ENCODE measurements at regions of chr6 and their contacts with region 1.

Region 1: DNA sequence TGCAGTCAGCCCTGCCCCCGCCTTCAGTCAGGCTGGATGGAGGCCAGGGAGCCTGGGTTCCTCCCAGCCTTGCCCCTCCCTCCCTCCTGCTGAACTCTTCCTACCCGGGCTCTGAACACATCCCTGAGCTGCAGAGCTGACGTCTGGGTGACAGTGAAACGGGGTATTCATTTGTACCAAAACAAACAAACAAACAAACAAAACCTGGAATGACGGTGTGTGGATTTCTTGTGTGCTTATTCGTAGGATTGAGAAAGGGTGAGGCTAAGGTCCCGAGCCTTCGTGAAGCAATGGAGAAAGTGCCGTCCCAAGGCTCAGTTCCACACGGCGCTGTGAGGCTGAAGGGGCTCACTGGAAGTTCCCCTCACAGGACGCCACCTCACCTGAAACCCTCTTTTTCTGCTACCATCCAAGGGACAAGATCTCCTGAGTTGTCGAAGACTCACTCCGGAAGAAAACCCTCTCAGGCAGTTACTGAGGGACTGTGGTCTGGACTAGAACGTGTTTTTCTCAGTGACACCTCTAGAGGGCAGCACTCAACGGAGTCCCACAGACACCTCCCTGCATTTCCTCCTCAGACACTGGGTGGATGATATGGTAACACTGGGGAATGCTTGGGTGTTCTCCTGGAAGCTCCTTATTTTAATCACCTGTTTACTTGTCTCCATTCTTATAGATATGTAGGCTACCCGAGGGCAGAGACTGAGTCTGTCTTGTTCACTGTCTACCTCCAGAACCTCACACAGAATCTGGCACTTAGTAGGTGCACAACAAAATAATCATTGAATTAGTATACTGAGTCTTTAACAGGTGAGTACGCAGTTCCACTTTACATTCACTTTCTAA is 27.3 kb downstream of the GSTA3 start:
- DNase-seq: peak; percentile 63 to 67
- H3K4me3 ChIP-seq: peak overlapping the region; percentile 55; the same call in 1 of the 2 replicates
- H3K27ac ChIP-seq: no peak overlapping the region
- H3K4me1 ChIP-seq: peaks cover 6% of the 10 kb centered on the region
- H3K27me3 ChIP-seq: no peaks in the 10 kb centered on the region
- CTCF ChIP-seq: peak; percentile 86

Region 2: DNA sequence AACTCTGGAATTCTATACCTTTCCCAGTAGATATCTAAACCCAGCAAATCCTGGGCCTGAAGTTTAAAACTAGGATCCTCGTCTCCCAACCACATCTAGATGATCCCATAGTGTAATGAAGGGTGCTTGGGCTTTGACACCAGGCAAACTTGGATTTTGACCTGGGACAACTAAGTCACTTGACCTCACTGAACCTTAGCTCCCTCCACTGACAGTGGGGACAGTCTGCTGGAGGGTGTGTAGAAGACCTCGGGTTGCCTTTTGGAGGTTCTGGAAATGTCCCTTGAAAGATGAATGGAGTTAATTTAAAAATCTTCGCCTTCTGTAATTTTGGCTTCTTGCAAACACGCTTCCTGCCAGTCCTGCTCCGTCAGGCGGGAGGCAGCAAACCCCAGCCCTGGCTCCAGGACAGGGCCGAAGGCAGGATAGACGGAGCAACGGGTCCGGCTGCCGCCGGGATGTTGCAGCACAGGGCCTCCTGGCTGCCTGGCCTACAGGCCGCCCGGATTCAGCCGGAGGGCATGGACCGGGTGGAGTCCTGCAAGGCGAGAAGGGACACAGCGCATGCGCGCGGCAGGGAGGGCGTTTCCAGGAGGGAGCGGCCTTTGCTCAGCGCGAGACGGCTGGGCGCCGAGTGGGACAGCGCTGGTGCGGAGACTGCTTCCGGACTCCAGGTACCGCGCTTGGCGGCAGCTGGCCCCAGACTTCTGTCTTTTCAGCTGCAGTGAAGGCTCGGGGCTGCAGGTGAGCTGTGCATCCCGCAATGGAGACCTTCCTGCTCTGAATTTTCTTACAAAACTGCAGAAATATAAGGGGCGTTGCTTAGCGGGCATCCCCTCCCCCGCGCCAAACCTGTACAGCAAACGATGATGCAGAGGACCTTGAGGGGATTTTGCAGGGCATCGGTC is 211.5 kb before region 1 on chr6 and contains the start of gene TMEM14A:
- CTCF ChIA-PET with region 1: interaction called, 10 read pairs
- POLR2A ChIA-PET with region 1: no interaction called
- intact Hi-C with region 1: no loop called
- DNase-seq: peak; percentile 85 to 96
- H3K4me3 ChIP-seq: peak within 1 kb of the TSS; percentile 69
- H3K27ac ChIP-seq: no peak within 1 kb of the TSS
- H3K4me1 ChIP-seq: peaks cover 22% of the 10 kb centered on the region
- H3K27me3 ChIP-seq: no peaks in the 10 kb centered on the region
- CTCF ChIP-seq: no peak
- total RNA-seq, gene TMEM14A: 48.9 and 75.2 TPM in 2 replicates

Region 3: GRCh38 chr6:52839119-52840055 is 42.8 kb before region 1 on chr6:
- CTCF ChIA-PET with region 1: no interaction called
- POLR2A ChIA-PET with region 1: no interaction called
- intact Hi-C with region 1: loop called (anchors 5 kb)
- DNase-seq: peak; percentile 50 to 63
- H3K4me3 ChIP-seq: peak overlapping the region; percentile 21; the same call in 1 of the 2 replicates
- H3K27ac ChIP-seq: no peak overlapping the region
- H3K4me1 ChIP-seq: no peaks in the 10 kb centered on the region
- H3K27me3 ChIP-seq: no peaks in the 10 kb centered on the region; the same call in 1 of the 2 replicates
- CTCF ChIP-seq: peak; percentile 84

Region 4: GRCh38 chr6:52953911-52954839 is 72.0 kb after region 1 on chr6:
- CTCF ChIA-PET with region 1: no interaction called
- POLR2A ChIA-PET with region 1: no interaction called
- intact Hi-C with region 1: no loop called
- DNase-seq: no peak
- H3K4me3 ChIP-seq: no peak overlapping the region
- H3K27ac ChIP-seq: no peak overlapping the region
- H3K4me1 ChIP-seq: no peaks in the 10 kb centered on the region
- H3K27me3 ChIP-seq: no peaks in the 10 kb centered on the region
- CTCF ChIP-seq: no peak

Region 5: DNA sequence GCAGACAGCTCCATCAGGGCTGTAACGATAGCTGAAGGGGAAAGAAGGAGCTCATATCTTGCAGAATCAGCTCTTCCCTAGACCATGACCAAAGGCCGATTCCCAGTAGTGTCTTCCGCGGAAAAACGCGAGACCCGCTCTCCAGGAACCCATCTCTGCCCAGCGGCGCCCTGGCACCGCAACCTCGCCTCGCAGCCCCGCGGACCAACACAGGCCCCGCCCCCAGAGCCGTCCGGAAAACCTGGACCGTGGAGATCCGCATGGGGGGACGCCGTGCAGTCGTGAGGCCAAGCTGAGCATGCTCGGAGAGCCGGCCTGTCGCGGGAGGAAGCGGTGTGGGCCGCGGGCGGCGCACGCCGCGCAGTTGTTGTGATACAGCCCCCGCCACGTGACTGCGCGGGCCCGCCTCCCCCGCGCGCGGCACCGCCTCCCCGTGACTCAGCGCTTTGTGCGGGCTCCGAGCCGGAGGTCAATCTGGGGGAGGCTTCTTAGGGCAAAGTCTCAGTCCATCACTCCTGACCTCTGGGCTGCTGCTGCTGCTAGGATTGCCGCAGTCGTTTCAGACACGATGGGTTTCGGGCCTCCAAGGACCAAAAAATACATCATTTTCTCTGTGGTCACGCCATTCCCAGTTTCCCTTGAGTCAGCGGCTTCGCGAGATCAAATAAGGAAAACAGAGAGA is 665.7 kb after region 1 on chr6:
- CTCF ChIA-PET with region 1: no interaction called
- POLR2A ChIA-PET with region 1: no interaction called
- intact Hi-C with region 1: no loop called
- DNase-seq: peak; percentile 92 to 98
- H3K4me3 ChIP-seq: peak overlapping the region; percentile 96
- H3K27ac ChIP-seq: peak overlapping the region; percentile 96
- H3K4me1 ChIP-seq: peaks cover 25% of the 10 kb centered on the region
- H3K27me3 ChIP-seq: no peaks in the 10 kb centered on the region
- CTCF ChIP-seq: no peak

Measured in PC-9 (cell line).